ENCODE measurements at regions of chr4 and their contacts with region 1.

Region 1: DNA sequence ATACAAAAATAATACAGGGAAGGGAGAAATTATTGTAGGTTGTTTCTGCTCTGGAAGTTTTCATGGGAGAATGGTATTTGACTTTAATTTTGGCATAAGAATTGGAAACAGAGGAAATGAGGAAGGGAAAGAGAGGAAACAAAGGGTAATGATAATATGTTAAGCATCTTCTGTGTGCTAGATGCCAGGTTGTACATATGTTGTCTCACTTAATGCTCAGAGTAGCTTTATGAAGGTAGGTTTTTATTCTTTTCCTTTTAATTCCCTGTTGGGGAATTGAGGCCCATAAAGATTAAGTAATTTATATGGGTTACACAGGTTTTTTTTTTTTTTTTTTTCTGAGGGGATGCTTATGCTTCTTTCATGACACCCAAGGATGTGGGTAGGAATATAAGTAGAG is 19.2 kb downstream of the BLTP1 start:
- DNase-seq: no peak

Region 2: DNA sequence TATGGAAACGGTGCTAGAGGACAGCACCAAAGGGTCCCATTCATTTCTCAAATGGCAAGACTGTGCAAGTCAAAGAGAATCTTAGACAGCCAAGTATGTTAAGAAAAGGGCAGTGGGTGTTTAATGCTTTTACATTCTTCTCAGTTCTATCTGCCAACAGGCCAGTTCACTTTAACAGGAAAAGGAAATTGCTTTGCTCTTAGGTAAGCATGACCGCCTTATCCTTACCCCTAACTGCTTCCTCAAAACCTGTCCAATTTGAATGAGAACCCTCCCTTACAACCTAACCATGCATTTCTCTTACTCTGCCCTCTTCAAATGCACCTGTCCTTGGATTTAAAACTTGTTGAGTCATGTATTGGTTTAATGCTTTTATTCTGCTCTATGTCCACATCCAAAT is 63.6 kb before region 1 on chr4:
- intact Hi-C with region 1: loop called (anchors 2 kb)
- DNase-seq: no peak

Region 3: DNA sequence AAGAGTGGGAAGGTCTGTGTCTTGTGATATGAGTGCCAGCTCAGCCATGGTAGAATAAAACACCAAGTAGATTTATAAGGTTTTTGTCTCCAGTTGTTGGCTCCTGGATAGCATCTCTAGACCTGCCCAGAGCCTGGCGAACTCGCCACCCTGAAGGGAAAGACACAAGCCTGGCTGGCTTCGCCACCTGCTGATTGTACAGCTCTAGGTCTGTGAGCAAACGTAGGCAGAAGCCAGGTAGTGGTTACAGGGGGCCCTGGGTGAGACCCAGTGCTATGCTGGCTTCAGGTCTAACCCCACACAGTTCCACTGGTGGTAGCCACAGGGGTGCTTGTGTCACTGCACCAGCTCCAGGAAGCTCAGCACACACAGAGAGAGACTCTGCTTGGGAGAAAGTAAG is 81.3 kb after region 1 on chr4:
- intact Hi-C with region 1: no loop called
- DNase-seq: no peak